Gastrocnemius medialis (tissue), 4 donors: ENCODE measurements at regions of chr1 and their contacts with region 1.

Region 1: DNA sequence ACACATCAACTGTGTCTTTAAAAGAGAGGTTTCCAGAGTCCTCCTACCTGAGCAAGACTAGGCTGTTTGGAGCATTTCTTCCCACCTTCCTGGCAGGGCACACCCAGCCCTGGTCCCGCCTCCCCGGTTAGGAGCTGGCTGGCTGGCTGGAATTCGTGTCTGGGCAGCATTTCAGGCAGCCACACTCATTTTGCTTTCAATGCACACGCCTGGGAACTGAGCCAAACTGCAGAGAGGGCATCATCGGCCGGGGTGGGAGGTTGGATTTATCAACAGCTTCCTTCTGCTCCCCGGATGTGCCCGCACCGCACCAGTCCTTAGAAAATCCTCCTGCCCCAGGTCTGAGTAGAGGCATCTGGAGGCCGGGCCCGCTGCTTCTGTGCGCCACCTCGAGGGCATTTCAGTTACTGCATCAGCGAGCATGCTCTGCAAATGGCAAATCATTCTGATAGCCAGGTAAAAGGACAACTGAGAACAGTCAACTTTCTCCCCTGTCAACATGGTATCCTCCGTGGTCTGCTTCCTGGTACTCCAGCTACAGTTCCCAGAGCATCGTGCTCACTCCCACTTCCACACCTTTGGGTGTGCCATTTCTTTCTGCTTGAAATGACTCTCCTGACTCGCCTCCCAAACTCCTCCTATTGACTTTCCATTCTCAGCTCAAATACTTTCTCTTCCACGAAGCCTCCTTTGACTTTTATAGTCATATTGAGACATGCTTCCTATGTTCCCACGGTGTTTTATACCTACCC is 20.6 kb downstream of the TCEA3 start:
- DNase-seq: peak; percentile 62 to 79
- ATAC-seq: peak; percentile 53 to 54
- H3K4me3 ChIP-seq: peak overlapping the region in 1 of 4 donors; percentile 22
- H3K27ac ChIP-seq: peak overlapping the region; percentile 79 to 85 (median 84)
- H3K4me1 ChIP-seq: peaks cover 27 to 59% of the 10 kb centered on the region in 2 donors
- H3K27me3 ChIP-seq: no peaks in the 10 kb centered on the region
- CTCF ChIP-seq: peak; percentile 76 to 98 (median 91)
- POLR2A ChIP-seq: no peak

Region 2: GRCh38 chr1:23325393-23325792 is 78.5 kb before region 1 on chr1:
- in situ Hi-C with region 1: loop called in 1 of 4 experiments (anchors 10 kb)
- intact Hi-C with region 1: loop called (anchors 5 kb)
- DNase-seq: no peak
- ATAC-seq: no peak
- H3K4me3 ChIP-seq: no peak overlapping the region
- H3K27ac ChIP-seq: no peak overlapping the region
- H3K4me1 ChIP-seq: peaks cover 10 to 20% of the 10 kb centered on the region in 2 donors
- H3K27me3 ChIP-seq: no peaks in the 10 kb centered on the region
- CTCF ChIP-seq: no peak
- POLR2A ChIP-seq: no peak

Region 3: DNA sequence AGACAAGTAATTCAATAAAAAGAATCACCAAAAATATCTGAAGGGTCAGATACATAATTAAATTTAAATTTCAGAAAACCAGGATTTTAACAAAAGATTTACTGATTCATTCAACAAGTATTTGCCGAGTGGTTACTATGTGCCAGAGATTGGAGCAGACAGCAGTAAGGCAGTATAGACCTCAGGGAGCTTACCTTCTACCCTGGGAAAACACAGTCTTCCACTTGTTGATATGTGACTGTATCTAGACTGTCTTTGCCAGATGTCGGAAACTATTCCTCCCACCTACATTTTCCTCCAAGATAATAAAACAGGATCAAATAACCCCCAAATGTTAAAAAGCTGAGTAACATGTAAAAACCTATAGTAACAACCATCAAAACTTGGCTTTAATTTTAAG is 66.0 kb before region 1 on chr1:
- in situ Hi-C with region 1: loop called in 2 of 4 experiments (anchors 10 kb)
- intact Hi-C with region 1: loop called (anchors 1 kb)
- DNase-seq: no peak
- ATAC-seq: no peak
- H3K4me3 ChIP-seq: no peak overlapping the region
- H3K27ac ChIP-seq: no peak overlapping the region
- H3K4me1 ChIP-seq: peaks cover 44 to 54% of the 10 kb centered on the region in 2 donors
- H3K27me3 ChIP-seq: no peaks in the 10 kb centered on the region
- CTCF ChIP-seq: no peak
- POLR2A ChIP-seq: no peak

Region 4: GRCh38 chr1:23367791-23368561 is 35.9 kb before region 1 on chr1:
- in situ Hi-C with region 1: no loop called
- intact Hi-C with region 1: loop called (anchors 2 kb)
- DNase-seq: peak; percentile 99
- ATAC-seq: peak; percentile 84
- H3K4me3 ChIP-seq: peak overlapping the region; percentile 82 to 99 (median 92)
- H3K27ac ChIP-seq: peak overlapping the region; percentile 99 to 100 (median 100)
- H3K4me1 ChIP-seq: peaks cover 44 to 47% of the 10 kb centered on the region in 2 donors
- H3K27me3 ChIP-seq: no peaks in the 10 kb centered on the region
- CTCF ChIP-seq: no peak
- POLR2A ChIP-seq: peak; percentile 81 to 82

Region 5: DNA sequence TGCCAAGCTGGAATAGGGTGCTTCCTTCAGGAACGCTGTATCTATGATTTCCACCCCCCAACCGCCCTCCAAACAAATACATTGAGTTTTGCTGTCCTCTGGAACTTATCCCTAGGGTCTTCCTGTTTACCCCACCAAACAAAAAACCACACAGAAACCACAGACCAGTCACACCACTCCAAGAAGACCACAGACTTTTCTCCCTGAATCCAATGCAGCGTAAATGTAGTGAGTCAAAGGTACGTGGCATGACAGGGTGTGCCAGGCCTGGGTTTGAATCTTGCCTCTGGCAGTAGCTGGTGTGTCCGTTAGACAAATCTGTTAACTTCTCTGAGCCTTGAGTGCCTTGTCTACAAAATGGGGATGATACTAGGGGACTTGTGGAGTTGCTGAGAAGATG is 52.3 kb after region 1 on chr1:
- in situ Hi-C with region 1: no loop called
- intact Hi-C with region 1: no loop called
- DNase-seq: no peak
- ATAC-seq: no peak
- H3K4me3 ChIP-seq: no peak overlapping the region
- H3K27ac ChIP-seq: peak overlapping the region; percentile 72 to 83 (median 80)
- H3K4me1 ChIP-seq: peaks cover 44% of the 10 kb centered on the region in 2 donors
- H3K27me3 ChIP-seq: no peaks in the 10 kb centered on the region
- CTCF ChIP-seq: no peak
- POLR2A ChIP-seq: no peak